ENCODE measurements at regions of chr16 and their contacts with region 1.

Region 1: GRCh38 chr16:67017810-67018488 is 11.0 kb upstream of the CBFB start:
- DNase-seq: peak; percentile 98
- ATAC-seq: peak; percentile 92
- H3K4me3 ChIP-seq: no peak overlapping the region
- H3K27ac ChIP-seq: peak overlapping the region; percentile 8; the same call in 1 of the 2 replicates
- H3K4me1 ChIP-seq: peaks cover 19 to 29% of the 10 kb centered on the region in 2 experiments
- H3K27me3 ChIP-seq: no peaks in the 10 kb centered on the region
- CTCF ChIP-seq: peak; percentile 90 to 96 (median 95)
- POLR2A ChIP-seq: no peak
- RAD21 ChIP-seq: peak; percentile 99

Region 2: DNA sequence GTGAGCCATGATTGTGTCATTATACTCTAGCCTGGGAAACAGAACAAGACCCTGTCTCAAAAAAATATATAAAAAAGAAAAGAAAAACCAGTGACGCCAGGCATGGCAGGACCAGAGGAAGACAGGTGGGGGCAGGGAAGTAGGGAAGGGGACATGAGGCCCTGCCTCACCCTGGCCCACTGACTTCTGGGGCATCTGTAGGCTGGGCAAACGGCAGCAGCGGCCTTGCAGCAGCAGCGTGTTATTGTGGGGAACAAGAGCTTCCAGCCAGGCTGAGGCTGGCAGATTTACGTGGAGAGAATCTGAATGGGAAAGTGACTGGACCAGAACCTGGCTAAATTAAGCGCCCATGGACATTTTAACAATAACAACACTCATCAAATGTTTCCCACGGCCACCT is 340.8 kb before region 1 on chr16:
- CTCF ChIA-PET with region 1: no interaction called
- POLR2A ChIA-PET with region 1: no interaction called
- RAD21 ChIA-PET with region 1: no interaction called
- intact Hi-C with region 1: no loop called
- DNase-seq: no peak
- ATAC-seq: no peak
- H3K4me3 ChIP-seq: no peak overlapping the region
- H3K27ac ChIP-seq: no peak overlapping the region
- H3K4me1 ChIP-seq: peaks cover 3 to 9% of the 10 kb centered on the region in 2 experiments; a peak in 3 of 4 replicates
- H3K27me3 ChIP-seq: no peaks in the 10 kb centered on the region
- CTCF ChIP-seq: no peak
- POLR2A ChIP-seq: no peak
- RAD21 ChIP-seq: no peak

Region 3: GRCh38 chr16:66894948-66895688 is 122.8 kb before region 1 on chr16:
- CTCF ChIA-PET with region 1: interaction called, 8 read pairs
- POLR2A ChIA-PET with region 1: no interaction called
- RAD21 ChIA-PET with region 1: no interaction called
- intact Hi-C with region 1: loop called (anchors 2 kb)
- DNase-seq: peak; percentile 45
- ATAC-seq: peak; percentile 93
- H3K4me3 ChIP-seq: no peak overlapping the region
- H3K27ac ChIP-seq: no peak overlapping the region
- H3K4me1 ChIP-seq: peaks cover 4 to 11% of the 10 kb centered on the region in 2 experiments; a peak in 3 of 4 replicates
- H3K27me3 ChIP-seq: no peaks in the 10 kb centered on the region
- CTCF ChIP-seq: peak; percentile 80 to 92 (median 89)
- POLR2A ChIP-seq: no peak
- RAD21 ChIP-seq: peak; percentile 97

Region 4: GRCh38 chr16:66961065-66961744 is 56.7 kb before region 1 on chr16 and contains the start of gene CES3:
- CTCF ChIA-PET with region 1: interaction called, 11 read pairs
- POLR2A ChIA-PET with region 1: no interaction called
- RAD21 ChIA-PET with region 1: interaction called in 1 of 2 experiments, 5 read pairs
- intact Hi-C with region 1: no loop called
- DNase-seq: peak; percentile 75
- ATAC-seq: peak; percentile 100
- H3K4me3 ChIP-seq: peak within 1 kb of the TSS; percentile 56 to 65
- H3K27ac ChIP-seq: peak within 1 kb of the TSS; percentile 20
- H3K4me1 ChIP-seq: peaks cover 6 to 17% of the 10 kb centered on the region in 2 experiments
- H3K27me3 ChIP-seq: no peaks in the 10 kb centered on the region
- CTCF ChIP-seq: peak; percentile 83 to 98 (median 97)
- POLR2A ChIP-seq: peak; percentile 60
- RAD21 ChIP-seq: no peak
- total RNA-seq, gene CES3: 10.8 TPM

Region 5: GRCh38 chr16:67006930-67007658 is 10.9 kb before region 1 on chr16:
- CTCF ChIA-PET with region 1: interaction called, 14 read pairs
- POLR2A ChIA-PET with region 1: no interaction called
- RAD21 ChIA-PET with region 1: no interaction called
- intact Hi-C with region 1: no loop called
- DNase-seq: no peak
- ATAC-seq: peak; percentile 50; the same call in 1 of the 2 replicates
- H3K4me3 ChIP-seq: no peak overlapping the region
- H3K27ac ChIP-seq: no peak overlapping the region
- H3K4me1 ChIP-seq: peaks cover 9 to 10% of the 10 kb centered on the region in 2 experiments
- H3K27me3 ChIP-seq: no peaks in the 10 kb centered on the region
- CTCF ChIP-seq: no peak
- POLR2A ChIP-seq: no peak
- RAD21 ChIP-seq: no peak

Region 6: GRCh38 chr16:67104061-67104460 is 86.1 kb after region 1 on chr16:
- CTCF ChIA-PET with region 1: interaction called, 26 read pairs
- POLR2A ChIA-PET with region 1: interaction called, 3 read pairs
- RAD21 ChIA-PET with region 1: interaction called, 3 to 6 read pairs
- intact Hi-C with region 1: loop called (anchors 2 kb)
- DNase-seq: no peak
- ATAC-seq: peak; percentile 89
- H3K4me3 ChIP-seq: no peak overlapping the region
- H3K27ac ChIP-seq: no peak overlapping the region
- H3K4me1 ChIP-seq: peaks cover under 1 to 9% of the 10 kb centered on the region in 2 experiments; a peak in 3 of 4 replicates
- H3K27me3 ChIP-seq: no peaks in the 10 kb centered on the region
- CTCF ChIP-seq: peak in 2 of 3 experiments; percentile 69 to 72; a peak in 4 of 6 replicates
- POLR2A ChIP-seq: no peak
- RAD21 ChIP-seq: peak; percentile 44

Region 7: DNA sequence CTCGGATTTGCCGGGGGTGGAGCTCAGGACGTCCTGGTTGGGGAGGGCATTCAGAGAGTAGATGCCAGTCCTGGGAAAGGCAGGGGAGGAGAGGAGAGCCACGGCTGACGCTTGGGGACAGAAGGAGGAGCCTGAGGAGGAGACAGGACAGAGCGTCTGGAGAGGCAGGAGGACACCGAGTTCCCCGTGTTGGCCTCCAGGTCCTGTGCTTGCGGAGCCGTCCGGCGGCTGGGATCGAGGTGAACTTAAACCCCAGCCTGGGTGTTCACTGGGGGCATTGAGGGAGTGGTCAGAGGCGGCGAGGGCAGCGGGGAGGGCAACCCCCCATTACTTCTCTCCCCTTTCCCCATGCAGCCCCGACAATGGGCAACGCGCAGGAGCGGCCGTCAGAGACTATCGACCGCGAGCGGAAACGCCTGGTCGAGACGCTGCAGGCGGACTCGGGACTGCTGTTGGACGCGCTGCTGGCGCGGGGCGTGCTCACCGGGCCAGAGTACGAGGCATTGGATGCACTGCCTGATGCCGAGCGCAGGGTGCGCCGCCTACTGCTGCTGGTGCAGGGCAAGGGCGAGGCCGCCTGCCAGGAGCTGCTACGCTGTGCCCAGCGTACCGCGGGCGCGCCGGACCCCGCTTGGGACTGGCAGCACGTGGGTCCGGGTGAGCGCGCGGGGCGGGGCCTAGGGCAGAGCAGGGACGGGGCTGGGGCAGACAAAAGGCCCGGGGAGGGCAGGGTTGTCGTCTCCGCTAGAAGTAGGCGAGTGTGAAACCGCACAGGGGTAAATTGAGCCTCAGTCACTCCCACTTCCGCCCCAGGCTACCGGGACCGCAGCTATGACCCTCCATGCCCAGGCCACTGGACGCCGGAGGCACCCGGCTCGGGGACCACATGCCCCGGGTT is 156.1 kb after region 1 on chr16:
- CTCF ChIA-PET with region 1: interaction called, 25 read pairs
- POLR2A ChIA-PET with region 1: interaction called, 3 read pairs
- RAD21 ChIA-PET with region 1: interaction called, 3 to 6 read pairs
- intact Hi-C with region 1: loop called (anchors 1 kb)
- DNase-seq: no peak
- ATAC-seq: peak; percentile 63
- H3K4me3 ChIP-seq: peak overlapping the region; percentile 67 to 70
- H3K27ac ChIP-seq: peak overlapping the region; percentile 97
- H3K4me1 ChIP-seq: peaks cover 57 to 90% of the 10 kb centered on the region in 2 experiments
- H3K27me3 ChIP-seq: no peaks in the 10 kb centered on the region
- CTCF ChIP-seq: peak in 1 of 3 experiments; percentile 18; a peak in 2 of 6 replicates
- POLR2A ChIP-seq: no peak
- RAD21 ChIP-seq: no peak

Region 8: DNA sequence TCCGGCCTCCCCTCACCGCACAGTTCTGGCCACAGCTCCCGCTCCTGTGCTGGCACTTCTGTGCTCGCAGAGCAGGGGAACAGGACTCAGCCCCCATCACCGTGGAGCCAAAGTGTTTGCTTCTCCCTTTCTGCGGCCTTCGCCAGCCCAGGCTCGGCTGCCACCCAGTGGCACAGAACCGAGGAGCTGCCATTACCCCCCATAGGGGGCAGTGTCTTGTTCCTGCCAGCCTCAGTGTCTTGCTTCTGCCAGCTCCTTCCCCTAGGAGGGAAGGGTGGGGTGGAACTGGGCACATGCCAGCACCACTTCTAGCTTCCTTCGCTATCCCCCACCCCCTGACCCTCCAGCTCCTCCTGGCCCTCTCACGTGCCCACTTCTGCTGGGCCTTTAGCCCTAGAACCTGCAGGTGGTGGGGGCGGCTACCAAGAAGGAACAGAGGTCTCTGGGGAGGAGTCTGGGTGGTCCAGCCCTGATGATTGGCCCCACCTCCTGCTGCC is 180.3 kb after region 1 on chr16:
- CTCF ChIA-PET with region 1: interaction called, 13 read pairs
- POLR2A ChIA-PET with region 1: no interaction called
- RAD21 ChIA-PET with region 1: no interaction called
- intact Hi-C with region 1: no loop called
- DNase-seq: peak; percentile 64
- ATAC-seq: peak; percentile 67
- H3K4me3 ChIP-seq: peak overlapping the region; percentile 78
- H3K27ac ChIP-seq: peak overlapping the region; percentile 99
- H3K4me1 ChIP-seq: peaks cover 19 to 42% of the 10 kb centered on the region in 2 experiments
- H3K27me3 ChIP-seq: no peaks in the 10 kb centered on the region
- CTCF ChIP-seq: peak in 2 of 3 experiments; percentile 98; a peak in 4 of 6 replicates
- POLR2A ChIP-seq: no peak
- RAD21 ChIP-seq: no peak

Measured in HCT116 (cell line).